ENCODE measurements at regions of chr6 and their contacts with region 1.

Region 1: GRCh38 chr6:142474531-142475289 is 172.9 kb downstream of the ADGRG6 start:
- DNase-seq: no peak
- H3K4me3 ChIP-seq: no peak overlapping the region
- H3K27ac ChIP-seq: no peak overlapping the region
- H3K4me1 ChIP-seq: no peaks in the 10 kb centered on the region
- H3K27me3 ChIP-seq: no peaks in the 10 kb centered on the region
- CTCF ChIP-seq: peak; percentile 60 to 85 (median 64)
- EP300 ChIP-seq: no peak
- POLR2A ChIP-seq: no peak

Region 2: DNA sequence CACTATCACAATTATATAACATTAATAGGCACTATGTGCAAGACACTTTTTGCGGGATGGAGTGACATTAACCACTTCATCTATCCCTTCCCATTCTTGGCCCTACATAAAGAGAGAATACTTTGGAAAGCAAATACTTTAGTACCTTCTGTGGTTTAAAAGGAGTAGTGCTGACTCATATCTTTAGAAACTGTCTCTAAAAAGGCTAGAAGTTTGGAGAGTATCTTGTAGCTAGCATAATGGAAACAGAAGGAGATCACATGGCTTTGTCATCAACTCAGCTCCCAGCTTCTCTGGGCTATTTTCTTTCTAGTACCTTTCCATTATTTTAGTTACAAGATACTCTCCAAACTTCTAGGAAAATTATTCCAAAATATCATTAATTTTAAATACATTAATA is 15.4 kb before region 1 on chr6:
- intact Hi-C with region 1: no loop called
- DNase-seq: no peak
- H3K4me3 ChIP-seq: no peak overlapping the region
- H3K27ac ChIP-seq: no peak overlapping the region
- H3K4me1 ChIP-seq: no peaks in the 10 kb centered on the region
- H3K27me3 ChIP-seq: no peaks in the 10 kb centered on the region
- CTCF ChIP-seq: no peak
- EP300 ChIP-seq: no peak
- POLR2A ChIP-seq: no peak

Region 3: DNA sequence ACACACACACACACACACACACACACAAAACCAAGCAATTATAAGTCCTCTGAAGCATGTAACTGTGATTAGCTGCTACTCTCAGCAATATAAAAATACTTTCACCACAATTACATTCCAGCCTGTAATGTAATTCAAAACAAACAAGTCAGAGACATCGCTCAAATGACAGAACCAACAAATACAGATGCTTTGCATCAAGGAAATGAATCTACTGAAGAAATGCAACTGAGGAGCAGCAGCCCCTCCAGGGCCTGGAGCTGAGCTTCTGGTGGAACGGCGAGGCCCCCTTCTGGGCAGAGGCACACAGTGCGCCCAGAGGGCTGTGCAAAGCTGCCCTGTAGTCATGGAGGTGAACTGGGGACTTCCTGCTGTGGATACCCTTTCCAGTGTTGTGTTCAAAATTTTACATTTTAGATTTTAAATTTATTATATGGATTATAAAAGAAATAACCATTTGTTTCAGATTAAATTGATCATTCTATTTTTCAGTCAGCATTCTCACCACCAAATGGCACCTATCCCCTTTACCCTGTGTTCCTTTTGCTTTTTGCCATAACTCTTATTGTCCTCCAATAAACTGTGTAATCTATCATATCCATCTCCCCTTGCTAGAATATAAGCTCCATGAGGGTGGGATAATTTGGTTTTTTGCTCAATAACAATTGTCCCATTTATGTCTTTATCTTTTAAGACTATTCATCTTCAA is 952.6 kb after region 1 on chr6:
- intact Hi-C with region 1: loop called (anchors 1 kb)
- DNase-seq: peak; percentile 78
- H3K4me3 ChIP-seq: no peak overlapping the region
- H3K27ac ChIP-seq: no peak overlapping the region
- H3K4me1 ChIP-seq: no peaks in the 10 kb centered on the region
- H3K27me3 ChIP-seq: no peaks in the 10 kb centered on the region
- CTCF ChIP-seq: peak; percentile 56 to 93 (median 78)
- EP300 ChIP-seq: no peak
- POLR2A ChIP-seq: no peak